Left ventricle myocardium superior (tissue), 1 donor: ENCODE measurements at regions of chr9 and their contacts with region 1.

Region 1: DNA sequence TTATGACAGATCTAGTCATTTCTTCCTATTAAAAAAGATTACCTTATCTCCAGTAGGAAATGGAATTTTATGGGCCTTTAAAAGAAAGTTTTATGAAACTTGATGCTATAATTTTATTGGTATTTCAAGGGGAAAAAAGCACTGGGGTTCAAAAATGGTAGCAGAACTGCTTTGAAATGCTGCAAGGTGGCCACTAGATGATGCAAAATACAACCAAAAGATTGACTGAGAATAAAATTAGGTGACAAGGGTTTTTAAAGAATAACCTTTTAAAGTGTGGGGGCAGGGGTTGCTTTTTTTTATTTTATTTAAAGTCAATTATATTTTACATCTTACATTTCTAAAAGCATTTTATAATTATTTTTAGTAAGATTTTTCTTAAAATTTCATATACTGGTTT is 61.7 kb downstream of the KLF9 start:
- DNase-seq: no peak
- ATAC-seq: no peak

Region 2: GRCh38 chr9:70406434-70406862 is 53.6 kb after region 1 on chr9:
- intact Hi-C with region 1: loop called (anchors 10 kb)
- DNase-seq: no peak
- ATAC-seq: no peak

Region 3: DNA sequence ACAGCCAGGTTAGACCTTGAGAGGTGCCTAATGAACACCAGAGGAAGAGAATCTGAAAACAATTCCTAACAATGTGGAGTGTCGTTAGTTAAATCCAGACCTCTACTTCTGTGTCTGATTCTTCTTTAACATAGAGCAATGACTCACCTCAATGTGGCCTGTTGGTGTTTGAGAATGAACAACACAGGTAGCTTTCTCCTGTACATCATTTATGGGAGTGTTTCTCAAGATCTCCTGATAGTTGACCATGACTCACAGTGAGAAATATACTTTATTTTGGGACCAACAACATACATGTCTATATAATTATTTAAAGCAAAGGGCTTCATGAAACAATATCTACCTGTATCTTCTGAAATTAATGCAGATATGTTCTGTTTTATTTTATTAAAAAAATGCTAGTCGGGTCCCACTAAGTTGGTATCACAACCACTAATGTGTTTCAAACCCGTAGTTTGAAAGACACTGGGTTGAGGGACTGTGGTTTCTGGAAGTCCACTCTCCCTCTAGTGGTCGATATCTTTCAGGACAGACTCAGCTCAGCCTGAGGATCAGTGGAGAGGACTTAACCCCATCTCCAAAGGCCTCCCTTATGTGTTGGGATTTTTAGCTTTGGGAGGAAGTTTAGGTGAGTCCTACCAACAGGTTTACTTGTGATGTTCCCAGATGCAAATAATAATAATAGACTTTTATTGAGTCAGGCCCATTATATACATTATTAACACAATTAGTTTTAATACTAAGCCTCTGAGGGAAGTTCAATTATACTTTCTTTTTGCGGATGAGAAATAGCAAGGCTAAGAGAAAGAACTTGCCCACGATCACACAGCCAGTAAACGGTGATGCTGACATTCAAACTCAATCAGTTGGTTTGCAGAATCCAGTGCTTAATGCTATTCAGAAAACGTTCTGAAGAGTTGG is 131.7 kb after region 1 on chr9:
- intact Hi-C with region 1: loop called (anchors 10 kb)
- DNase-seq: no peak
- ATAC-seq: peak; percentile 69

Region 4: DNA sequence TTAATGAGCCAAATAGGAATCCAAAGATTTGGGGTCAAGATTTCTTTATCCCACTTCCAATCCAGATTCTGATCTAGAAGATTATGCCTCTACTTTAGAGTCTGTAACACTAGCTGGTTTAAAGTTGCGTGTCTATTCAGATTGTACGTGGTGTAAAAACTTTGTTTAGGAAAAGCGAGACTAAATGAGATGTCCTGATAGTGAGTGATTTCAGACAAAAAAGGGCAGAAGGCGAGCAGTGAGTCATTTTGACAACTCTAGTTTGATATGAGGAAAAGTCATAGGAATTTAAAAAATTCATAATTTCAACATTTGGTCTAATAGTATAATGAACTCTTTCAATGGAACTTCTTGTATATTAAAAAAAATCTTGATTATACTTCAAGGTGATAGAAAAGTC is 181.3 kb after region 1 on chr9:
- intact Hi-C with region 1: loop called (anchors 10 kb)
- DNase-seq: no peak
- ATAC-seq: no peak

Region 5: DNA sequence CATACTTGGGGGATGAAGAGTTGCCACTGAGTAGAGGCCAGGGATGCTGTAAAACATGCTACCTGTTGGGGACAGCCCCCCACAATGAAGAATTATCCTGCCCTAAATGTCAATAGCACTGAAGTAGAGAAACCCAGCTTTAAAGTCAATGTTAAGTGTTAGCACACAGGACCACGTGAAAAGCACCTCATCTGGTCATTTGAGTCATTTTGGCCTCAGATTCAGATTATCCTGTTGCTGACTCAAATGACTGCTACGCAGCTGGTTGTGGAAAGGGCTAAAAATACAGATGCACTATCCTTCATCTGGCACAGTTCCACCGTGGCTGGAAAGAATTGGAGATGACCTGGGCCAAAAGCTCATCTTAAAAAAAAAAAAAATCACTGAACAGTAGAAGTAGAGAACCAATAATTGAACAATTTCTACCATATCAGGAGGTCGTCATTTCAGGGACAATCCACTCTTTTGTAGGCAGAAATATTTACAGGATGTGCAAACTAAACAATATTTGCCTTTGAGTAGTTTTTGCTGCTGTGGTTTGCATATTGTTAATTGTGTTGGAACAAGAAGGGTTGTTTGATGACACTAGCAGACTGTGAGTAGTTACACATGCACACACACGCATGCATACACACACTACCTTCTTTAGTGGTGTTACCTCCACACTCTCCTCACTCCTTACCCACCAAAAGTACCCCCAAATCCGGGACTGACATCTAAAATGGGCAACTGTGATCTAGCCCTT is 256.9 kb after region 1 on chr9:
- intact Hi-C with region 1: loop called (anchors 5 kb)
- DNase-seq: no peak
- ATAC-seq: peak; percentile 77